ENCODE measurements at regions of chr9 and their contacts with region 1.

Region 1: DNA sequence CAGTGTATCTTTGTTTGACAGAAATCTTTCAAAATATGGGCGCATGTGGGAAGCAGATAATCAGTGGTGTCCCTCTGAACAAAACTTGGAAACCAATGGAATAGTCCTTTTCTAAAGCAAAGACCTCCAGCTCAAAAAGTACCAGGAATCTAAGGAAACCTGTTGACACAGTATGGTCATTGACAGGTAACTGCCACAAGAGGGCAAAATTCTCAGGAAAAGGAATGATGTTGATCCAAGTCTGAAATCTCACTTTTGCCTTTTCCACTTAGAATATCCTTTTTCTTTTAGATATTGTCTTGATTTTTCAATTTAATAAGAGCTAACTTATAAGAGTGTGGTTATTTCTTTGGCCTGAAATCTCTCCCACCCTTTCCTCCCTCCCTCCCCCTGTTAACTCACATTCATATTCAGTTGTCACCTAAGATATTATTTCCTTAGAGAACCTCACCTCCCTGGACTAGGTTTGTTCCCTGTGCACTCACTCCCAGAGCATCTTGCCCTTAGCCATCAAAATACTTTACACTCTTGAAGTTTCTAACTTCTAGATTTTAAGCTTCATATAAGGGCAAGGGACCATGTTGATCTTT is 59.0 kb upstream of the BARX1 start:
- DNase-seq: peak in 2 of 9 experiments; percentile 24 to 35
- ATAC-seq: no peak
- H3K4me3 ChIP-seq: no peak overlapping the region
- H3K4me3 Mint-ChIP-seq: no peak overlapping the region
- H3K27ac ChIP-seq: no peak overlapping the region
- H3K27ac Mint-ChIP-seq: no peak overlapping the region
- H3K4me1 ChIP-seq: peaks cover 18% of the 10 kb centered on the region
- H3K4me1 Mint-ChIP-seq: peaks cover 17% of the 10 kb centered on the region
- H3K27me3 ChIP-seq: no peaks in the 10 kb centered on the region
- H3K27me3 Mint-ChIP-seq: no peaks in the 10 kb centered on the region
- CTCF ChIP-seq: peak; percentile 51

Region 2: DNA sequence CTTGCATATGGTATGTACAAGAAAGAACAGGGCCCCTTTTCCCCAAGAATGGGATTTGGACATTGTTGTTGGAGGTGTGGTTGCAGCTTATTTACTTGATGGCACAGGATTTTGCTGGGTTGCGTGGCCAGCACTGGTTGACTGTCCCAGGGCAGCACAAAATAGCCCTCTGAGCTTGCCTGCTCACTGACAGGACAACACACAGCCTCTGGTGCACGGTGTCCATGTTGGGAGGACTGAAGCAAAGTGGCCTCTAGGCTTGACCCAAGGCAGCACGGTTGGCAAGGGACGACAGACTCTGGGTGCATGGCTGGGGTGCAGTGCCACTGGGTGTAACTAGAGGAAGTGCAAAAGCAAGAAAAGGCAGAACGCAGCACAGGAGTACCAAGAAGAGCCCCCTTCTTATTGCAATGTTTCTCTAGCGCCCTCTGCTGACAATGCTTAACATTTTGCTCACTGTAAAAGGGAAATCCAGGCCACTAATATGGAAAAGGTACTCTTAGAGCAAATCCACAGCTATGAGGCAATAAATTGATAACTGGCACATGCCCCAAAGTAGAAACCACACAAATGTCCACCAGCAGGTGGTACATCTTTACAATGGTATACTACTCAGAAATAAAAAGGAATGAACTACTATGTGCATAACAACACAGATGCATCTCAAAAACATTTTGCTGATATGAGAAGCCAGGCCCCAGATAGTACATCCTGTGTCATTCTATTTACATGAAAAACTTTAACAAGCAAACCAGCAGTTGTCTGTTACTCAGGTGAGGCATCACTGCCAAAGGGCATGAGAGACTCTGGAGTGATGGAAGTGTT is 11.6 kb before region 1 on chr9:
- CTCF ChIA-PET with region 1: interaction called, 21 read pairs
- POLR2A ChIA-PET with region 1: no interaction called
- intact Hi-C with region 1: no loop called
- DNase-seq: peak in 3 of 9 experiments; percentile 19 to 49 (median 37)
- ATAC-seq: peak; percentile 29
- H3K4me3 ChIP-seq: no peak overlapping the region
- H3K4me3 Mint-ChIP-seq: no peak overlapping the region
- H3K27ac ChIP-seq: no peak overlapping the region
- H3K27ac Mint-ChIP-seq: no peak overlapping the region
- H3K4me1 ChIP-seq: no peaks in the 10 kb centered on the region
- H3K4me1 Mint-ChIP-seq: no peaks in the 10 kb centered on the region
- H3K27me3 ChIP-seq: no peaks in the 10 kb centered on the region
- H3K27me3 Mint-ChIP-seq: peaks cover 18% of the 10 kb centered on the region
- CTCF ChIP-seq: peak; percentile 35

Measured in CD8-positive, alpha-beta T cell (primary cell).